Tibial artery (tissue), 4 donors: ENCODE measurements at regions of chr1 and their contacts with region 1.

Region 1: GRCh38 chr1:6359216-6360116 is 34.1 kb downstream of the ACOT7 start:
- DNase-seq: peak; percentile 67 to 78
- H3K4me3 ChIP-seq: peak overlapping the region in 1 of 2 donors; percentile 17
- H3K27ac ChIP-seq: peak overlapping the region; percentile 53 to 70
- H3K4me1 ChIP-seq: peaks cover 0 to 26% (median 20%) of the 10 kb centered on the region in 4 donors
- H3K27me3 ChIP-seq: no peaks in the 10 kb centered on the region
- CTCF ChIP-seq: no peak

Region 2: DNA sequence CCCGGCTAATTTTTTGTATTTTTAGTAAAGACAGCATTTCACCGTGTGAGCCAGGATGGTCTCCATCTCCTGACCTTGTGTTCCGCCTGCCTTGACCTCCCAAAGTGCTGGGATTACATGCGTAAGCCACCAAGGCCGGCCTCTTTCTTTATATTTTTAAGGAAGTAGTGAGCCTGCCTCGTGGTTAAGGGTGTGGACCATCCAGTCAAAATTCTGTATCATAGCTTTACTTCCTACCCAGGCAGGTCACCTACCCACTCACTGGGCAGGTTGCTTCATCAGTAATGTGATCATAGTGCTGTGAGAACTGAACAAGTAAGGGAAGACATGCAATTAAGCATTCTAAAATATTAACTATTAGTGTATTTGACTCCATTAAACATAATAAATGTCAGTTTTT is 42.2 kb after region 1 on chr1:
- intact Hi-C with region 1: loop called (anchors 2 kb)
- DNase-seq: no peak
- H3K4me3 ChIP-seq: no peak overlapping the region
- H3K27ac ChIP-seq: no peak overlapping the region
- H3K4me1 ChIP-seq: no peaks in the 10 kb centered on the region
- H3K27me3 ChIP-seq: peaks cover 0 to 29% of the 10 kb centered on the region in 2 donors
- CTCF ChIP-seq: no peak

Region 3: GRCh38 chr1:6554031-6554906 is 194.8 kb after region 1 on chr1 and contains the start of gene NOL9:
- intact Hi-C with region 1: no loop called
- DNase-seq: peak; percentile 88 to 96
- H3K4me3 ChIP-seq: peak within 1 kb of the TSS; percentile 85 to 100
- H3K27ac ChIP-seq: peak within 1 kb of the TSS; percentile 77 to 86
- H3K4me1 ChIP-seq: peaks cover 0 to 27% (median 23%) of the 10 kb centered on the region in 4 donors
- H3K27me3 ChIP-seq: no peaks in the 10 kb centered on the region
- CTCF ChIP-seq: peak; percentile 96 to 98